Activated CD4-positive, alpha-beta memory T cell treated with anti-CD3 and anti-CD28 coated beads for 36 hours (primary cell): ENCODE measurements at regions of chr2 and their contacts with region 1.

Region 1: GRCh38 chr2:197310271-197310985 is at the start of gene ANKRD44:
- DNase-seq: peak; percentile 91
- H3K4me3 Mint-ChIP-seq: peak within 1 kb of the TSS; percentile 95
- H3K27ac Mint-ChIP-seq: peak within 1 kb of the TSS; percentile 99
- H3K4me1 Mint-ChIP-seq: peaks cover 67% of the 10 kb centered on the region
- H3K27me3 Mint-ChIP-seq: no peaks in the 10 kb centered on the region
- total RNA-seq, gene ANKRD44: 123 to 125 TPM

Region 2: DNA sequence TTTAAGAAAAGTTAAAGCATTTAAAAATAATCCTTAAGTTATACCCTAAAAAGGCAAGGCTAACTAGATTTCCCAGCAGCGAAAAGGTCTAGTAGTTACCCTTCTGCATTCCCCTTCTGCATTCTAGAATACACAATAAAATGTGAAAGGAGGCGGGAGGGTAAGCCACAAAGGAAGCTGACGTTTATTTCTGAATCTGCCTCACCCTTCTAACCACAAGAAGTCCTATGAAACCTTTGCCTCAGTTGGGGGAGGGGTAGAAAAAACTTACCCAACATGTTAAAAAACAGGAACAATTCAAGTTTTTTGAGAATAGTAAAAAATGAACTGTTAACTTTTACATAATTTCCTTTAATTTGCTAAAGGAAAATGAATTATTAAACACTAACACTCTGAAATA is 1150.3 kb before region 1 on chr2:
- CTCF ChIA-PET with region 1: no interaction called
- POLR2A ChIA-PET with region 1: no interaction called
- intact Hi-C with region 1: loop called (anchors 5 kb)
- DNase-seq: peak; percentile 76
- H3K4me3 Mint-ChIP-seq: peak overlapping the region; percentile 39
- H3K27ac Mint-ChIP-seq: peak overlapping the region; percentile 96
- H3K4me1 Mint-ChIP-seq: peaks cover 77% of the 10 kb centered on the region
- H3K27me3 Mint-ChIP-seq: no peaks in the 10 kb centered on the region

Region 3: DNA sequence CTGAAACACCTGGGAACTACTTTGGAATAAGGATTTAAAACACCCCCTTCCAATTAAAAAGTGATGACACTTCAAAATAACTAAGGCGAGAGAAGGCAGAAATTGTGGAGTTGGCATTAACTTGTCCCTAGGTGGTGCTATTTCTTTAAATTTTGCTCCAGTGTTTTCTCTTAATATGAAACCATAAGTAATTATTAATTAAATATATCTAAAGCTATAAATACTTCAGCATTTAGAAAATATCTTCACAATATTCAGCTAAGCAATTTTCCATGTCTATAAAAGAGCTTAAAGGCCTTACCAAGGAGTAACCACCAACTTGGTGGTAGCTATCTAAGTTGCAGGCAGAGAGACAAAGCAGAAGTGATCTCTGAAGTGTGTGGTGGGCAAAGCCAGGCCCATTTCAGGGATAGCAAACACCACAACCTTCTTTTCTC is 197.1 kb before region 1 on chr2:
- CTCF ChIA-PET with region 1: interaction called, 20 read pairs
- POLR2A ChIA-PET with region 1: no interaction called
- intact Hi-C with region 1: loop called (anchors 2 kb)
- DNase-seq: no peak
- H3K4me3 Mint-ChIP-seq: no peak overlapping the region
- H3K27ac Mint-ChIP-seq: peak overlapping the region; percentile 76
- H3K4me1 Mint-ChIP-seq: peaks cover 20% of the 10 kb centered on the region
- H3K27me3 Mint-ChIP-seq: no peaks in the 10 kb centered on the region

Region 4: GRCh38 chr2:197209742-197210408 is 100.6 kb before region 1 on chr2:
- CTCF ChIA-PET with region 1: interaction called, 11 read pairs
- POLR2A ChIA-PET with region 1: interaction called, 18 read pairs
- intact Hi-C with region 1: loop called (anchors 1 kb)
- DNase-seq: peak; percentile 86
- H3K4me3 Mint-ChIP-seq: peak overlapping the region; percentile 58
- H3K27ac Mint-ChIP-seq: peak overlapping the region; percentile 94
- H3K4me1 Mint-ChIP-seq: peaks cover 98% of the 10 kb centered on the region
- H3K27me3 Mint-ChIP-seq: no peaks in the 10 kb centered on the region

Region 5: DNA sequence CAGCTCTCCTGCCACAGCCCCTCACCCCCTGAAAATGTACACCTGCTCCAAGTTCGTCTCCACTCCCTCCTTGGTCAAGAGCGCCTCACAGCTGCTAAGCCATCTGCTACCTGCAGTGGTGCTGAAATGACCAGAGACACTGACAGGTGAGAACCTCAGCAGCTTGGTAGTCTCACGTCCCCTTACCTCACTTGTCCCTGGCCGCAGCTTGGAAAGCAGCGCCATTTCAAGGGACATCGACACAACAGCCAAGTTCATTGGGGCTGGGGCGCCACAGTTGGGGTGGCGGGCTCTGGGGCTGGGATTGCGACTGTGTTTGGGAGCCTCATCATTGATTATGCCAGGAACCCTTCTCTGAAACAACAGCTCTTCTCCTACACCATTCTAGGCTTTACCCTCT is 47.4 kb before region 1 on chr2:
- CTCF ChIA-PET with region 1: interaction called, 5 read pairs
- POLR2A ChIA-PET with region 1: interaction called, 33 read pairs
- intact Hi-C with region 1: loop called (anchors 1 kb)
- DNase-seq: no peak
- H3K4me3 Mint-ChIP-seq: no peak overlapping the region
- H3K27ac Mint-ChIP-seq: peak overlapping the region; percentile 90
- H3K4me1 Mint-ChIP-seq: peaks cover 89% of the 10 kb centered on the region
- H3K27me3 Mint-ChIP-seq: no peaks in the 10 kb centered on the region

Region 6: DNA sequence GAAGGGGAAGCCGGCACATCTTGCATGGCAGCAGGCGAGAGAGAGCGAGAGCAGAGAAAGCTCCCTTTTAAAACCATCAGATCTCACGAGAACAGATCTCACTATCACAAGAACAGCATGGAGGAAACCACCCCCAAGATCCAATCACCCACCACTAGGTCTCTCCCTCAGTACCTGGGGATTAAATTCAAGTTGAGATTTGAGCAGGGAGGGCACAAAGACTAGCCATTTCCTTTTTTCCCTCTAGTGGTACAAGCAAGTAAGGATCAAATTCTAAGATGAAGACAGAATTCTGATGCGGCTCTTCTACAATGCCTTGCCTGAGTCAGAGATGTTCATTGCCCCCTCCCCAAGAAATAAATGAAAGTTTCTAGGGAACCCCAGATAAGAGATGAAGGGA is 45.7 kb after region 1 on chr2:
- CTCF ChIA-PET with region 1: interaction called, 5 read pairs
- POLR2A ChIA-PET with region 1: no interaction called
- intact Hi-C with region 1: loop called (anchors 5 kb)
- DNase-seq: no peak
- H3K4me3 Mint-ChIP-seq: no peak overlapping the region
- H3K27ac Mint-ChIP-seq: no peak overlapping the region
- H3K4me1 Mint-ChIP-seq: peaks cover 39% of the 10 kb centered on the region
- H3K27me3 Mint-ChIP-seq: no peaks in the 10 kb centered on the region

Region 7: GRCh38 chr2:197423307-197423706 is 112.9 kb after region 1 on chr2:
- CTCF ChIA-PET with region 1: no interaction called
- POLR2A ChIA-PET with region 1: no interaction called
- intact Hi-C with region 1: no loop called
- DNase-seq: no peak
- H3K4me3 Mint-ChIP-seq: no peak overlapping the region
- H3K27ac Mint-ChIP-seq: no peak overlapping the region
- H3K4me1 Mint-ChIP-seq: peaks cover 56% of the 10 kb centered on the region
- H3K27me3 Mint-ChIP-seq: no peaks in the 10 kb centered on the region

Region 8: DNA sequence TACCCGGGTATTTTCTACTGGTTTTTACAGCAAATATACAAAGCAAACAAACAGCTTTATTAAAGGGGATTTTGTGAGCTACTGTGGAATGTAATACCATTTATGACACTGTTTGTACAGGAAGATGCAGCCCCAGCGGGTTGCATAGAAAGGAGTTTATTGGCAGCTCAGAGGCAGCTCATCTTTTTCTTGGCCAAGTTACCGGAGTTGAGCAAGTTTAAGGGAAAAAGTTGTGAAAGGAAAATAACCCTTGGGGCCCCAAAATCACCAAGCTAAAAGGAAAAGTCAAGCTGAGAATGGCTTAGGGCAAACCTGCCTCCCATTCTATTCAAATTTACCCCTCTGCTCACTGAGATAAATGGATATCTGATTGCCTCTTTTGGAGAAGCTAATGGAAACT is 266.2 kb after region 1 on chr2:
- CTCF ChIA-PET with region 1: no interaction called
- POLR2A ChIA-PET with region 1: no interaction called
- intact Hi-C with region 1: no loop called
- DNase-seq: no peak
- H3K4me3 Mint-ChIP-seq: no peak overlapping the region
- H3K27ac Mint-ChIP-seq: no peak overlapping the region
- H3K4me1 Mint-ChIP-seq: no peaks in the 10 kb centered on the region
- H3K27me3 Mint-ChIP-seq: no peaks in the 10 kb centered on the region